ENCODE measurements at regions of chr17 and their contacts with region 1.

Region 1: DNA sequence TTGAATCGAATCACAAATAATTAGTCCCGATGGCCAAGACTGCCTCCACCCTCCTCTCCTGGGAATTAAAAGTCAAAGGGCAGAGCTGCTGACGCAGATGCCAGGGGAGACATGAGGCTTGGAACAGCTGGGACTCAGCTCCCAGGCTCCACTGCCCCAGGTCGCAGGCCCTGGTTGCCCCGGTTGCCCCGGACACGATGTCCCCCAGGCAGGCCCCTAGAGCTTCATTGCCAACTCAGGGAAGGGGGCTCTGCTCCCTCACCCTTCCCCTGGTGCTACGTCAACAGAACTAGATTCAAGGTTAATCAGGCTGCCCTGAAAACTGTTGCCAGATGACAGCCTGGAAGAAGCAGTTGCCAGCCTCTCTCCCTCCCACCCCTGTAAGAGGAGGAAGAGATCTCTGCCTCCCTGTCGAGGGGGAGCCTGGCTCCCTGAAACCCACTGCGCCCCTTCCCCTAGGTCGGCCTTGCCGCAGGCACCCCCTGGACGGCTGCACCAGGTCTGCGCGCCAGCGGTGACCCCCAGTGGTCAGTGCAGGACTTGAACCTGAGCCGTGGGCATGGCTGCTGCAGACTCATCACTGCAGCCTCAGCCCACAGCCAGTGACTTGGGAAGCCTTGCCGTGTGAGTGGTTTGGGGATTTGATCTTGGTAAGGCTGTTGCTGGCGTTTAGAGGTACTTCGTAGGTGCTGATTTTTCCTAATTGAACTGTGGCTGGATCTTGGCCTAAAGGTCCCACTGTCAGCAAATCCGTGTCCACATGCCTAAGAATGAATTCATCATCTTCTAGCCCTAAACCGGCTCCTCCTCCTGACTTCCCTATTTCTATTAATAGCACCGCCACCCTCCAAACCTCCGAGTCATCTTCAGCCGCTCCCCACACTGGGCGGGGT is 84.1 kb upstream of the TOB1 start:
- DNase-seq: peak; percentile 93
- H3K4me3 ChIP-seq: no peak overlapping the region
- H3K27ac ChIP-seq: peak overlapping the region; percentile 66
- H3K4me1 ChIP-seq: peaks cover 69% of the 10 kb centered on the region
- H3K27me3 ChIP-seq: no peaks in the 10 kb centered on the region
- CTCF ChIP-seq: peak; percentile 56 to 80

Region 2: DNA sequence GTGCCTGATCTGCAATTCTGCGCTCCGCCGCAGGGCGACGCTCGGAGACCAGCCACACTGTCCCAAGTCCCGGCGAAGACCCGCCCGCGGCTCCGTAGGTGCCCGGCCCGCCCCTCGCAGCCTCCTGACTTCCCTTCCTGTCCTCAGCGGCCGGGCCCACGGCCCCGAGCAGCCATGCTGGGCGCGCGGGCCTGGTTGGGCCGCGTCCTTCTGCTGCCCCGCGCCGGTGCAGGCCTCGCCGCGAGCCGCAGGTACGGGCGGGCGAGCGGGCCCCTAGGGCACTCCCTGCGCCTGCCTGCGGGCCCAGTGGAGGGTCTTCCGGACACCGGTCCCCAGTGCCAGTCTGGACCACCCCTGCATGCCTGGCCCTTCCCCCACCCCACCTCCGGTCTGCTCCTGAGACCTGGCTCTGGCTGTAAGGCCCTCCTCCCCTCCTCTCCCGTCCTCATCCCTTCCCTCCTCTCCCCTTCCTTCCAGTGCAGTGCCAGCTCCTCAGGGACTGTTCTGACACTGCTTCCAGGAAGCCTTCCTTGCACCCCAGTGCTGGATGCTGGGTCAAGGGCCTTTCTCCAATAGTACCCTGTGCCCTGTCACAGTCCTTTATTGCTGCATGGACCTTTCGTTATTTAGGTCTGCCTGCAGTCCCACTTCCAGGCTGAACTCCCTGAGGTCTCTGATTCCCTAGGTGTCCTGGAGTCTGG is 403.1 kb before region 1 on chr17 and contains the start of gene SPATA20:
- CTCF ChIA-PET with region 1: no interaction called
- dilution Hi-C with region 1: no loop called
- in situ Hi-C with region 1: no loop called
- intact Hi-C with region 1: loop called (anchors 5 kb)
- DNase-seq: peak; percentile 82
- H3K4me3 ChIP-seq: peak within 1 kb of the TSS; percentile 37 to 56 (median 55)
- H3K27ac ChIP-seq: peak within 1 kb of the TSS; percentile 23
- H3K4me1 ChIP-seq: peaks cover 21% of the 10 kb centered on the region
- H3K27me3 ChIP-seq: no peaks in the 10 kb centered on the region
- CTCF ChIP-seq: peak; percentile 95 to 99
- total RNA-seq, gene SPATA20: 65.6 to 79.9 TPM

Region 3: DNA sequence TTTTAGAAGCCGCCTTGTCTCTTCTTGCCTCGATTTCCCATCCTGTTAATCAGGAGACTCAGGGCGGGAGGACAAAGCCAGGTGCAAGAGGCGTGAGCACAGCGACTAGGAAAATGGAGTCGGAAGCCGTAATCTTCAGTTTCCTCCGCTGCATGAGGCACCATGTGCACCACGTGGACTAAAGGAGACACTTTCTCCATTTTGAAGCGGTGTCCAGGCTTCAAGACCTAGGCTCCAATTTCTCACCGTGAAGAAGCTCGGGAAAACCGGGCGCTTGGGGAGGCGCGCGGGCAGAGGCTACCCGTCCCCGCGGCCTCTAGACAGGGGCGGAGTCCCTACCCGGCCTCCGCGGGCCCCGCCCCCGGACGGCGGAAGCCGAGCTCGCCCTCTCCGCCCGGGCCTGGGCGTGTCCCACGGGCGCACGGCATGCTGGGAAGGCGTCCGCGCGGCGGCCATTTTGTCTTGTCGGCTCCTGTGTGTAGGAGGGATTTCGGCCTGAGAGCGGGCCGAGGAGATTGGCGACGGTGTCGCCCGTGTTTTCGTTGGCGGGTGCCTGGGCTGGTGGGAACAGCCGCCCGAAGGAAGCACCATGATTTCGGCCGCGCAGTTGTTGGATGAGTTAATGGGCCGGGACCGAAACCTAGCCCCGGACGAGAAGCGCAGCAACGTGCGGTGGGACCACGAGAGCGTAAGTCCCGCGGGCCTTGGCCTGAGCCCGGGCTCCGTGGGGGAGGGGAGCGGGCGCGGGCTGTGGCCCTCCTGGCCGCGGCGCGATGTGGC is 230.9 kb before region 1 on chr17 and contains the start of gene LUC7L3:
- CTCF ChIA-PET with region 1: no interaction called
- dilution Hi-C with region 1: no loop called
- in situ Hi-C with region 1: no loop called
- intact Hi-C with region 1: loop called (anchors 5 kb)
- DNase-seq: peak; percentile 95
- H3K4me3 ChIP-seq: peak within 1 kb of the TSS; percentile 85 to 99 (median 86)
- H3K27ac ChIP-seq: peak within 1 kb of the TSS; percentile 97
- H3K4me1 ChIP-seq: peaks cover 18% of the 10 kb centered on the region
- H3K27me3 ChIP-seq: no peaks in the 10 kb centered on the region
- CTCF ChIP-seq: no peak
- total RNA-seq, gene LUC7L3: 13.5 to 83.9 TPM

Region 4: GRCh38 chr17:50783193-50783660 is 167.0 kb before region 1 on chr17:
- CTCF ChIA-PET with region 1: no interaction called
- dilution Hi-C with region 1: no loop called
- in situ Hi-C with region 1: loop called (anchors 10 kb)
- intact Hi-C with region 1: no loop called
- DNase-seq: peak; percentile 77
- H3K4me3 ChIP-seq: no peak overlapping the region
- H3K27ac ChIP-seq: no peak overlapping the region
- H3K4me1 ChIP-seq: peaks cover 27% of the 10 kb centered on the region
- H3K27me3 ChIP-seq: no peaks in the 10 kb centered on the region
- CTCF ChIP-seq: peak; percentile 99 to 100

Region 5: GRCh38 chr17:50853015-50853615 is 97.1 kb before region 1 on chr17:
- CTCF ChIA-PET with region 1: interaction called, 10 read pairs
- dilution Hi-C with region 1: loop called (anchors 5 kb)
- in situ Hi-C with region 1: loop called in 1 of 2 experiments (anchors 5 kb)
- intact Hi-C with region 1: loop called (anchors 1 kb)
- DNase-seq: no peak
- H3K4me3 ChIP-seq: no peak overlapping the region
- H3K27ac ChIP-seq: no peak overlapping the region
- H3K4me1 ChIP-seq: peaks cover 12% of the 10 kb centered on the region
- H3K27me3 ChIP-seq: no peaks in the 10 kb centered on the region
- CTCF ChIP-seq: no peak

Region 6: GRCh38 chr17:50904521-50905459 is 45.4 kb before region 1 on chr17:
- CTCF ChIA-PET with region 1: no interaction called
- dilution Hi-C with region 1: loop called (anchors 5 kb)
- in situ Hi-C with region 1: no loop called
- intact Hi-C with region 1: loop called (anchors 5 kb)
- DNase-seq: no peak
- H3K4me3 ChIP-seq: no peak overlapping the region
- H3K27ac ChIP-seq: peak overlapping the region; percentile 90
- H3K4me1 ChIP-seq: peaks cover 50% of the 10 kb centered on the region
- H3K27me3 ChIP-seq: no peaks in the 10 kb centered on the region
- CTCF ChIP-seq: no peak

Region 7: DNA sequence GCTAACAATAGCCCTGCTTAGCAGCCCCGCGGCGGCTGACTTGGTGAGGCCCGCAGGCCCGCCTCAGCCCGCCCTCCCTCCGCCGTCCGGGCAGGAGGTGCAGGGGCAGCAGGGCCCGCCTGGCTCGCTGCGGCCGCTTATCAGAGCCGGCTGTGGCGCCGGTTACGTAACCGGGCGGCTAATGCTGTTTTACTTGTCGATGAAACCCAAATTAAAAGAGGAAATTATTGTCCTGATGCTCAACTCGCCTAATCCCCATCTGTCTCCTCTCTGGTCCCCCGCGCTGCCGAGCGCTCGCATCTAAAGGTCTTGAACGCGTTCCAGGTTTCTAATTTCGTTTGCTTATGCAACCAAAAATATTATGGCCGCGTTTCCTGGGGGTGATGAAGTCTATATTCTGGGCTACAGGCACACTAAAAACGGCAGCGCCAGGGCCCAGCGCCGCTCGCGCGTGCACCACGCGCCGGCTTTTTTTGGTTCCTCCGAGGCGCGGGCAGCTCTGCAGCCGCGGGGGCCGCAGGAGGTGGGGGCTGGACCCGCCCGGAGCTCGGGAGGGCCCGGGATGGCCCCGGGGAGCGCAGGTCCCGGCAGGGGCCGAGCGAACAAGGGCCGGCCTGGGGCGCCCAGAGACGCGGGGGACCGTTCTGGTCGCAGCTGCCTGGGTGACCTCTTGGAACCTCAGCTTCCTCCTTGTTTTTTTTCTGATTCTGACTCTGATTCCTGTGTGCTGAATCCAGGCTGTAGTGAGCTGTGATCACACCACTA is 18.9 kb before region 1 on chr17:
- CTCF ChIA-PET with region 1: no interaction called
- dilution Hi-C with region 1: no loop called
- in situ Hi-C with region 1: no loop called
- intact Hi-C with region 1: loop called (anchors 1 kb)
- DNase-seq: peak; percentile 73
- H3K4me3 ChIP-seq: peak overlapping the region in 2 of 3 experiments; percentile 21 to 27
- H3K27ac ChIP-seq: peak overlapping the region; percentile 88
- H3K4me1 ChIP-seq: peaks cover 61% of the 10 kb centered on the region
- H3K27me3 ChIP-seq: no peaks in the 10 kb centered on the region
- CTCF ChIP-seq: no peak